GM10248 (cell line): ENCODE measurements at regions of chr4 and their contacts with region 1.

Region 1: DNA sequence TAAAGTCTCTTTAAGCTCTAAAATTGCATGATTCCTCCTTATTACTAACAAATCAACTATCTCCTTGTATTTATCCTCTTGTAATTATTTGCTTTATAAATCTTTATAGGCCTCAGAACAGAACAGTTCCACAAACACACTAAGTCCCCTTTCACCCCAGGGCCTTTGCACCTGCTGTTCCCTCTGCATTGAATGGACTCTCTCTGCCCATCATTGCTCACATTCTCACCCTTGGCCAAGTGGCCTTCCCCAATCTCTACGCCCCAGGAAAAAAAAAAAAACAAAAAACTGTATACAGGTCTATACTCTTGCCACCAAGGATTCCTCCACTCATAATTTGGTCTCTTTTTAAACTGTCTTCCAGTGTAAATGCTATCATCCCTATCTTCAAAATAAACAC is 53.7 kb downstream of the TEC start:
- DNase-seq: no peak
- CTCF ChIP-seq: no peak

Region 2: DNA sequence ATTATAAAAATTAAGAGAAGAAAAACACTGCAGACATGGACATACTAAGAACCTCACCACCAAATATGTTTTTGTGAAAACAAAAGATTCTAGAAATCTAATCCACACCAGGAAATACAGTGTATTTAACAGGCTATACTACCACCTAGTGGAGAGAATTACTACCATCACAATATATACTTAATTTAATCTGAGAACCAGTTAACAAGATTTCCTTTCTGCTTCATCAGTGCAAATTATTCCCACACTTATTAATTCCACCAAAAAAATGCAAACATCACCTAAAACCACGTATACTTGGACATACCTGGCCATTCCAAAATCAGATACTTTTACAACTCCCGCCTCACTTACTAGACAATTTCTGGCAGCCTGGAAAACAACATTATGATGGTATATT is 74.9 kb before region 1 on chr4:
- CTCF ChIA-PET with region 1: no interaction called
- POLR2A ChIA-PET with region 1: no interaction called
- DNase-seq: peak; percentile 41
- CTCF ChIP-seq: peak; percentile 13

Region 3: DNA sequence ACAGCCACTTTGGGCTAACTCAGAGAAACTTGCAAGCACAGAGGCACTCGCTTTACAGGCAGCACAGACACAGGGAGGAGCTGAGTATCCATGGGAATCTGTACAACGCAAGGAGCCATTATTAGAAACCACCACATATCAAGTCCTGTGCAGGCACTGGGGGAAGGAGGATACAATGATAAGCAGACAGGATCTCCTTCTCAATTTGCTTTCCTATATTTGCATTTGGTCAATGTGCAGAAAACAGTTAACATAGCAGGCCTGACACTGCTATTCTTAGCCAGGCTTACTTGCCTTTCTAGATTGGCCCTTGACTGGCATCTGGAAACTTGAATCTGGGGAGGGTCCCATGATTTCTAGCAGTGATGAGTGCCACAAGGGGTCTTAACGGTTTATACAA is 12.2 kb before region 1 on chr4:
- CTCF ChIA-PET with region 1: interaction called, 17 read pairs
- POLR2A ChIA-PET with region 1: no interaction called
- DNase-seq: no peak
- CTCF ChIP-seq: no peak